CD4-positive, alpha-beta T cell (primary cell): ENCODE measurements at regions of chr19 and their contacts with region 1.

Region 1: DNA sequence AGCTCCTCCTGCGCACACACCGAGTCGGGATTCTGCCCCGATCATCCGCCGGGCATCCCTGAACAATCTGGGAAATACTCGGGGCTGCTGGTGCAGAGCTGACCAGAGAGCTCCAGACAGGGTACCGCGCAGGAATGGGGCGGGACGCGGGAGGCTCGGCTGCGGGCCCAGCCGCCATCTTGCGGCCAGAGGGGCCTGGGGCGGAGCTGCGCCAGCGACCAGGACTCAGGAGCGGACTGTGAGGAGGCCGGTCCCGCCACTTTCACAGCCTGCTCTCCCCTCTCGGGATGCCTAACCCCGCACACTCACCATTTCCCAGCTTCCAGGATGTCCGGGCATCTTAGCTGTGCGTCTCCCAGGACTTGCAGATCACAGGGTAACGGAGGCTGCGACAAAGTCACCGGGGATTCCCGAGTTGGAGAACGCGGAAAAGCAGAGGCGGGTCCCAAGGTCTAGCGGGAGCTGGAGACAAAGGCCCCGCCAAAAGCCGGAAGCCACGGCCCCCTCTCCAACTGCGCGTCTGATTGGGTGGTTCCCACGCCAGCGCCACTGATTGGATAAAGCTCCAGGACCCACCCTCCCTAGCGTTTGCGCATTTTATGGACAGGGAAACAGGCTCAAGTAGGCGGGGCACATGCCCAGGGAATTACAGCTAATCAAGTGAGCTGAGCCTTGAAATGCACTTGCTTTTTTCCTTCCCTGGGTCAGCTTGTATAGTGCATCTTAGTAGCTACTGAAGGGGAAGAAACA is 15.8 kb upstream of the ZNF43 start:
- DNase-seq: peak; percentile 79 to 94 (median 86)
- ATAC-seq: peak; percentile 99
- H3K4me3 ChIP-seq: peak overlapping the region; percentile 72
- H3K4me3 Mint-ChIP-seq: peak overlapping the region; percentile 97
- H3K27ac ChIP-seq: peak overlapping the region; percentile 55 to 56
- H3K27ac Mint-ChIP-seq: peak overlapping the region; percentile 94
- H3K4me1 ChIP-seq: peaks cover 14% of the 10 kb centered on the region
- H3K4me1 Mint-ChIP-seq: peaks cover 28% of the 10 kb centered on the region
- H3K27me3 ChIP-seq: no peaks in the 10 kb centered on the region
- H3K27me3 Mint-ChIP-seq: no peaks in the 10 kb centered on the region
- CTCF ChIP-seq: no peak

Region 2: DNA sequence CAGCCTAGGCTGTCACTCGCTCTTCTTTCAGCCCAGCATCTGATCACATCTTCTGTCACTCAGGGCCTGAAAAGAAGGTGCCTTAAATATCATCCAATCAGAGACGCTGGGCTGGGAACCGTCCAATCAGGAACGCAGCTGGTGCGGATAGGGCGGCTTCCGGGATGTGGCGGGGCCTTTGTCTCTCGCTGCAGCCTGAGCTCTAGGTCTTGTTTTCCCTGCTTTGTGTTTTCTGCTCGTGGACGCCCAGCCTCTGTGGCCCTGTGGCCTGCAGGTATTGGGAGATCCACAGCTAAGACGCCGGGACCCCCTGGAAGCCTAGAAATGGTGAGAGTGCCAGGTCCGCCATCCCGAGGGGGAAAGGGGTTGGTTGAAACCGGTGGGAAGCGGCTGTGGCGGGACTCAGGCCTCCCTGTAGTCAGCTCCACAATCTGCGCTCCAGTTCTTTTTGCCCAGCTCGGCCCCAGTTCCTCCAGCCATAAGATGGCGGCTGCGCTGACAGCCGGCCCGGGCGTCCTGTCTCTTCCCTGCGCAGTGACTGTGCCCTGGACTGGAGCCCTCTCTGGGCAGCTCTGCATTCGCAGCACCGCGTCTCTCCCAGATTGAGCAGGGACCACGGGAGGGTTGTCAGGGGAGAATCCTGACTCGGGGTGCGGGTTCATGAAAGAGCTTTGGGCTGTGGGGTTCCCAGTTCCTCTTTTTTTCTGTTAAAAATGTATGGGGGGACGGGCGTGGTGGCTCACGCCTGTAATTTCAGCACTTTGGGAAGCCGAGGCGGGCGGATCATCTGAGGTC is 928.5 kb before region 1 on chr19 and contains the start of gene ZNF85:
- CTCF ChIA-PET with region 1: no interaction called
- POLR2A ChIA-PET with region 1: interaction called, 10 read pairs
- intact Hi-C with region 1: no loop called
- DNase-seq: peak; percentile 79 to 97 (median 86)
- ATAC-seq: peak; percentile 99
- H3K4me3 ChIP-seq: peak within 1 kb of the TSS; percentile 83
- H3K4me3 Mint-ChIP-seq: peak within 1 kb of the TSS; percentile 96
- H3K27ac ChIP-seq: peak within 1 kb of the TSS; percentile 44 to 75
- H3K27ac Mint-ChIP-seq: peak within 1 kb of the TSS; percentile 89
- H3K4me1 ChIP-seq: peaks cover 12% of the 10 kb centered on the region
- H3K4me1 Mint-ChIP-seq: peaks cover 26% of the 10 kb centered on the region
- H3K27me3 ChIP-seq: no peaks in the 10 kb centered on the region
- H3K27me3 Mint-ChIP-seq: no peaks in the 10 kb centered on the region
- CTCF ChIP-seq: no peak
- total RNA-seq, gene ZNF85: 3.4 to 4.7 TPM

Region 3: DNA sequence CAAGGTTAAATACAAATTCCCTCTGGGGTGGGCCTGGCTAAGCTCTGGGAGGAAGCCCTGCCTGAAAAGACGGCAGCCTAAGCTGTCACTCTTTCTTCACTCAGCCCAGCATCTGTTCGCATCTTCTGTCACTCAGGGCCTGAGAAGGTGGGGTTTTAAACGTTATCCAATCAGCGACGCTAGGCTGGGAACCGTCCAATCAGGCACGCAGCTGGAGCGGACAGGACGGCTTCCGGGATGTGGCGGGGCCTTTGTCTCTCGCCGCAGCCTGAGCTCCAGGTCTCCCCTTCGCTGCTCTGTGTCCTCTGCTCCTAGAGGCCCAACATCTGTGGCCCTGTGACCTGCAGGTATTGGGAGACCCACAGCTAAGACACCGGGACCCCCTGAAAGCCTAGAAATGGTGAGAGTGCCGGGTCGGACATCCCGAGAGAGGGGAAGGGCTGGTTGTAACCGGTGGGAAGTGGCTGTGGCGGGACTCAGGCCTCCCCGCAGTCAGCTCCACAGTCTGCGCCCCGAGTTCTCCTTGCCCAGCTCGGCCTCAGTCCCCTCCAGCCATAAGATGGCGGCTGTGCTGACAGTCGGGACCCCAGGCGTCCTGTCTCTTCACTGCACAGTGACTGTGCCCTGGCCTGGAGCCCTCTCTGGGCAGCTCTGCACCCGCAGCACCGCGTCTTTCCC is 709.8 kb before region 1 on chr19 and contains the start of gene ZNF431:
- CTCF ChIA-PET with region 1: no interaction called
- POLR2A ChIA-PET with region 1: interaction called, 4 read pairs
- intact Hi-C with region 1: loop called in 1 of 2 experiments (anchors 10 kb)
- DNase-seq: peak; percentile 79 to 96 (median 84)
- ATAC-seq: peak; percentile 99
- H3K4me3 ChIP-seq: peak within 1 kb of the TSS; percentile 67
- H3K4me3 Mint-ChIP-seq: peak within 1 kb of the TSS; percentile 95
- H3K27ac ChIP-seq: peak within 1 kb of the TSS; percentile 25 to 37
- H3K27ac Mint-ChIP-seq: peak within 1 kb of the TSS; percentile 91
- H3K4me1 ChIP-seq: peaks cover 8% of the 10 kb centered on the region
- H3K4me1 Mint-ChIP-seq: peaks cover 45% of the 10 kb centered on the region
- H3K27me3 ChIP-seq: no peaks in the 10 kb centered on the region
- H3K27me3 Mint-ChIP-seq: no peaks in the 10 kb centered on the region
- CTCF ChIP-seq: no peak
- total RNA-seq, gene ZNF431: 24.6 to 25.9 TPM

Region 4: DNA sequence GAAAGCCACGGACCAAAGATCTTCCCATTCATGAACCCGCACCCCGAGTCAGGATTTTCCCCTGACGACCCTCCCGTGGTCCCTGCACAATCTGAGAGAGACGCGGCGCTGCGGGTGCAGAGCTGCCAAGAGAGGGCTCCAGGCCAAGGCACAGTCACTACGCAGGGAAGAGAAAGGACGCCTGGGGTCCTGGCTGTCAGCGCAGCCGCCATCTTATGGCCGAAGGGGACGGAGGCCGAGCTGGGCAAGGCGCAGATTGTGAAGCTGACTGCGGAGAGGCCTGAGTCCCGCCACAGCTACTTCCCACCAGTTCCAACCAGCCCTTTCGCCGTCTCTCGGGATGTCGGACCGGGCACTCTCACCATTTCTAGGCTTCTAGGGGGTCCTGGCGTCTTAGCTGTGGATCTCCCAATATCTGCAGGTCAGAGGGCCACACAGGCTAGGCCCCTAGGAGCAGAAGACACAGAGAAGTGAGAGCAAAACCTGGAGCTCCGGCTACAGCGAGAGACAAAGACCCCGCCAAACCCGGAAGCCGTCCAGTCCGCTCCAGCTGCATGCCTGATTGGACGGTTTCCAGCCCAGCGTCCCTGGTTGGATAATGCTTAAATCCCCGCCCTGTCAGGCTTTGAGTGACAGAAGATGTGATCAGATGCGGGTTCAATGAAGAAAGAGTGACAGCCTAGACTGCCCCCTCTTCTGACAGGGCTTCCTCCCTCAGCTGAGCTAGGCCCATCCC is 84.5 kb before region 1 on chr19 and contains the start of gene ZNF100:
- CTCF ChIA-PET with region 1: interaction called, 5 read pairs
- POLR2A ChIA-PET with region 1: interaction called, 38 read pairs
- intact Hi-C with region 1: no loop called
- DNase-seq: peak; percentile 73 to 92 (median 82)
- ATAC-seq: peak; percentile 98
- H3K4me3 ChIP-seq: peak within 1 kb of the TSS; percentile 94
- H3K4me3 Mint-ChIP-seq: peak within 1 kb of the TSS; percentile 95
- H3K27ac ChIP-seq: peak within 1 kb of the TSS; percentile 44 to 52
- H3K27ac Mint-ChIP-seq: peak within 1 kb of the TSS; percentile 87
- H3K4me1 ChIP-seq: peaks cover 13% of the 10 kb centered on the region
- H3K4me1 Mint-ChIP-seq: peaks cover 45% of the 10 kb centered on the region
- H3K27me3 ChIP-seq: no peaks in the 10 kb centered on the region
- H3K27me3 Mint-ChIP-seq: no peaks in the 10 kb centered on the region
- CTCF ChIP-seq: no peak
- total RNA-seq, gene ZNF100: 10.8 to 11.0 TPM

Region 5: GRCh38 chr19:21910318-21910717 is 58.5 kb after region 1 on chr19:
- CTCF ChIA-PET with region 1: no interaction called
- POLR2A ChIA-PET with region 1: no interaction called
- intact Hi-C with region 1: no loop called
- DNase-seq: no peak
- ATAC-seq: no peak
- H3K4me3 ChIP-seq: no peak overlapping the region
- H3K4me3 Mint-ChIP-seq: no peak overlapping the region
- H3K27ac ChIP-seq: no peak overlapping the region
- H3K27ac Mint-ChIP-seq: no peak overlapping the region
- H3K4me1 ChIP-seq: no peaks in the 10 kb centered on the region
- H3K4me1 Mint-ChIP-seq: no peaks in the 10 kb centered on the region
- H3K27me3 ChIP-seq: no peaks in the 10 kb centered on the region
- H3K27me3 Mint-ChIP-seq: no peaks in the 10 kb centered on the region
- CTCF ChIP-seq: no peak

Region 6: GRCh38 chr19:22052644-22053013 is 200.9 kb after region 1 on chr19:
- CTCF ChIA-PET with region 1: interaction called, 4 read pairs
- POLR2A ChIA-PET with region 1: interaction called, 17 read pairs
- intact Hi-C with region 1: loop called in 1 of 2 experiments (anchors 10 kb)
- DNase-seq: peak in 8 of 14 experiments; percentile 3 to 33 (median 15)
- ATAC-seq: peak; percentile 43
- H3K4me3 ChIP-seq: peak overlapping the region; percentile 70
- H3K4me3 Mint-ChIP-seq: peak overlapping the region; percentile 97
- H3K27ac ChIP-seq: no peak overlapping the region
- H3K27ac Mint-ChIP-seq: peak overlapping the region; percentile 90
- H3K4me1 ChIP-seq: peaks cover 7% of the 10 kb centered on the region
- H3K4me1 Mint-ChIP-seq: peaks cover 13% of the 10 kb centered on the region
- H3K27me3 ChIP-seq: no peaks in the 10 kb centered on the region
- H3K27me3 Mint-ChIP-seq: no peaks in the 10 kb centered on the region
- CTCF ChIP-seq: no peak

Region 7: GRCh38 chr19:23273590-23274413 is 1422.0 kb after region 1 on chr19:
- CTCF ChIA-PET with region 1: no interaction called
- POLR2A ChIA-PET with region 1: interaction called, 3 read pairs
- intact Hi-C with region 1: loop called in 1 of 2 experiments (anchors 10 kb)
- DNase-seq: peak; percentile 80 to 96 (median 90)
- ATAC-seq: peak; percentile 98
- H3K4me3 ChIP-seq: peak overlapping the region; percentile 98
- H3K4me3 Mint-ChIP-seq: peak overlapping the region; percentile 99
- H3K27ac ChIP-seq: peak overlapping the region; percentile 72 to 88
- H3K27ac Mint-ChIP-seq: peak overlapping the region; percentile 97
- H3K4me1 ChIP-seq: peaks cover 11% of the 10 kb centered on the region
- H3K4me1 Mint-ChIP-seq: peaks cover 32% of the 10 kb centered on the region
- H3K27me3 ChIP-seq: no peaks in the 10 kb centered on the region
- H3K27me3 Mint-ChIP-seq: no peaks in the 10 kb centered on the region
- CTCF ChIP-seq: no peak